Activated CD4-positive, alpha-beta memory T cell treated with anti-CD3 and anti-CD28 coated beads for 36 hours (primary cell): ENCODE measurements at regions of chr12 and their contacts with region 1.

Region 1: GRCh38 chr12:27733052-27733656 is 22.5 kb downstream of the MRPS35 start:
- DNase-seq: peak; percentile 46
- H3K4me3 Mint-ChIP-seq: no peak overlapping the region
- H3K27ac Mint-ChIP-seq: no peak overlapping the region
- H3K4me1 Mint-ChIP-seq: no peaks in the 10 kb centered on the region
- H3K27me3 Mint-ChIP-seq: no peaks in the 10 kb centered on the region

Region 2: DNA sequence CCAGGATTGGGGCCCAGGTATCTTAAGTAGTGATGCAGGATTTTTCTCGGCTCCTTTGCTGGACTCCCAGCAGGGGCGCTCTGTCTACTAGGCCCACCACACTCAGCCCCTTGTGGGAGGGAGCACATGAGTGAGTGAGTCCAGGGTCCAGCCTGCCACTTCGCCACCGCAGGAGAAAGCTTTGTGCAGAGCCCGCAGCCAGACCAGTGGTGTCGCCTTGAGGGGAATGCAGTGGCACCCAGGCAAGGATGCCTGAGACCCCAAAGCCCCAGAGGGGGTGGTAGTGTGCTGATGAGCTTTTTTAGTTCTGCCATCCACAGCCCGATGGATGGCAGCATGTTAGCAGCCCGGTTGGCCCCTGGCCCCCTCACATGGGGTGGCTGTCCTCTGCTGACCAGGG is 27.9 kb before region 1 on chr12:
- CTCF ChIA-PET with region 1: no interaction called
- POLR2A ChIA-PET with region 1: no interaction called
- intact Hi-C with region 1: no loop called
- DNase-seq: no peak
- H3K4me3 Mint-ChIP-seq: no peak overlapping the region
- H3K27ac Mint-ChIP-seq: no peak overlapping the region
- H3K4me1 Mint-ChIP-seq: peaks cover 2% of the 10 kb centered on the region
- H3K27me3 Mint-ChIP-seq: peaks cover 9% of the 10 kb centered on the region

Region 3: DNA sequence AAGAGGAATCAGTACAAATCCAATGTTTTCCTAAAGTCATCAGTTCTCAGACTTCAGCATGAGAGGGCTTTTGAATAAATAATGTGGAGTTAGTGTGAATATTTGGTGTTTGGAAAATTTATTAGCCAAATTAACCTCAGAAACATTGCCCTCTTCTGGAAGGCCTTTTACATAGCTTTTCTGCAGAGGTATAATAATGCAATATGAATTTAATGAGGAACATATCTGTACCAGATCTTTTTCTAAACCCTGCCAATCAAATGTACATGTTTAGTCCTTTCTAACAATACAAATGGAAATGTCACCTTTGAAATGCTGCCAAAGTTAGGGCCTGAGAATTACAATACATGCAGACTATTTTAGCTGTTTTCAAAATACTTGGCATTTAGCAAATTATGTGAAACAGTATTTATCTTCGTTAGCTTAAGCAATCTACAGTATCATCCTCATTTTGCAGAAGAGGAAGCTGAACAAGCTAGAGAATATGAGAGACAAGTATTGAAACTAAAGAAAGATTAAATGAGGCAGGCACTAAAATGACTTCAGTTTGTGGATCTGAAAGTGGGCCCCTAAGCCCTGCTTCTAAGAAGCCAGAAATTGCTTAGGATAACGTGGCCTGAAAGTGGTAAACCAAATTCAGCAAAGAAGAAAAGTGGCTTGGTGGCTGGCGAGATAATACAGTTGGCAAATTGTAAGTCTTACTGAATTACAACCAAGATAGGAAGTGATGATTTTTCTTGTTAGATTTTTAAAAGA is 107.3 kb after region 1 on chr12:
- CTCF ChIA-PET with region 1: interaction called, 10 read pairs
- POLR2A ChIA-PET with region 1: no interaction called
- intact Hi-C with region 1: no loop called
- DNase-seq: no peak
- H3K4me3 Mint-ChIP-seq: no peak overlapping the region
- H3K27ac Mint-ChIP-seq: no peak overlapping the region
- H3K4me1 Mint-ChIP-seq: no peaks in the 10 kb centered on the region
- H3K27me3 Mint-ChIP-seq: no peaks in the 10 kb centered on the region

Region 4: DNA sequence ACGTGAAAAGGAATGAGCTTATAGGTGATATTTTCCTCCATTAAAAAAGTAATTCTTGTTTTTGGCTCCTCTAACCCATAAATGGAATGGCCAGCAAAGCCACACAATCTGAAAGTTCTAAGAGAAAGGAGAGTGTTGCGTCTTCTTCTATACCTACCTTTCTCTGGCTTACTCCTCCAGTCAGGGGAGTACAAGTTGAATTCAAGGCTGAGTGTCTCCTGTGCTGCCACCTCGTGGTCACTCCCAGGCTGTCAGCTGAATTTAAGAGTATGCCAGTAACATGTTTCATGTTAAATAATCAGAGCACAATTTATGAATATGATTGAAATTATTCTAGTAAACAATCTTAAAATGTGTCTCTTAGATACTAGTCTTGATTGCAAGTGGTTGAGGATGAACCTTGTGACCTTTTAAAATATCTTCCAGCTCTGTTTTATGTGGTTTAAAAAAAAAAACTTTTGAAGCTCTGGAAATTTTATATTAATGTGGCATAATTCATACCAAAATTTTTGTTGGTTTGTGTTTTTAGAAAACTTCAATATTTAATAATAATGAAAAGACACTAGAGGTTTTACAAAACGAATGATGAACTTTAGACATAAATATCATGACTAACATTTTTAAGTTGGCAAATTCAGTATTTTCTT is 207.7 kb after region 1 on chr12:
- CTCF ChIA-PET with region 1: interaction called, 102 read pairs
- POLR2A ChIA-PET with region 1: no interaction called
- intact Hi-C with region 1: loop called (anchors 1 kb)
- DNase-seq: peak; percentile 87
- H3K4me3 Mint-ChIP-seq: no peak overlapping the region
- H3K27ac Mint-ChIP-seq: no peak overlapping the region
- H3K4me1 Mint-ChIP-seq: no peaks in the 10 kb centered on the region
- H3K27me3 Mint-ChIP-seq: peaks cover 8% of the 10 kb centered on the region

Region 5: GRCh38 chr12:28550757-28551704 is 817.9 kb after region 1 on chr12:
- CTCF ChIA-PET with region 1: no interaction called
- POLR2A ChIA-PET with region 1: no interaction called
- intact Hi-C with region 1: loop called (anchors 5 kb)
- DNase-seq: no peak
- H3K4me3 Mint-ChIP-seq: no peak overlapping the region
- H3K27ac Mint-ChIP-seq: no peak overlapping the region
- H3K4me1 Mint-ChIP-seq: peaks cover 12% of the 10 kb centered on the region
- H3K27me3 Mint-ChIP-seq: no peaks in the 10 kb centered on the region

Region 6: GRCh38 chr12:28872654-28873268 is 1139.6 kb after region 1 on chr12:
- CTCF ChIA-PET with region 1: interaction called, 13 read pairs
- POLR2A ChIA-PET with region 1: no interaction called
- intact Hi-C with region 1: no loop called
- DNase-seq: peak; percentile 35
- H3K4me3 Mint-ChIP-seq: no peak overlapping the region
- H3K27ac Mint-ChIP-seq: no peak overlapping the region
- H3K4me1 Mint-ChIP-seq: no peaks in the 10 kb centered on the region
- H3K27me3 Mint-ChIP-seq: no peaks in the 10 kb centered on the region

Region 7: GRCh38 chr12:28998637-28999120 is 1265.5 kb after region 1 on chr12:
- CTCF ChIA-PET with region 1: no interaction called
- POLR2A ChIA-PET with region 1: no interaction called
- intact Hi-C with region 1: loop called (anchors 10 kb)
- DNase-seq: peak; percentile 24
- H3K4me3 Mint-ChIP-seq: no peak overlapping the region
- H3K27ac Mint-ChIP-seq: no peak overlapping the region
- H3K4me1 Mint-ChIP-seq: no peaks in the 10 kb centered on the region
- H3K27me3 Mint-ChIP-seq: peaks cover 11% of the 10 kb centered on the region